ENCODE measurements at regions of chr19 and their contacts with region 1.

Region 1: GRCh38 chr19:9658769-9659168 is 16.1 kb downstream of the ZNF562 start:
- DNase-seq: no peak
- H3K27ac ChIP-seq: no peak overlapping the region
- CTCF ChIP-seq: no peak

Region 2: DNA sequence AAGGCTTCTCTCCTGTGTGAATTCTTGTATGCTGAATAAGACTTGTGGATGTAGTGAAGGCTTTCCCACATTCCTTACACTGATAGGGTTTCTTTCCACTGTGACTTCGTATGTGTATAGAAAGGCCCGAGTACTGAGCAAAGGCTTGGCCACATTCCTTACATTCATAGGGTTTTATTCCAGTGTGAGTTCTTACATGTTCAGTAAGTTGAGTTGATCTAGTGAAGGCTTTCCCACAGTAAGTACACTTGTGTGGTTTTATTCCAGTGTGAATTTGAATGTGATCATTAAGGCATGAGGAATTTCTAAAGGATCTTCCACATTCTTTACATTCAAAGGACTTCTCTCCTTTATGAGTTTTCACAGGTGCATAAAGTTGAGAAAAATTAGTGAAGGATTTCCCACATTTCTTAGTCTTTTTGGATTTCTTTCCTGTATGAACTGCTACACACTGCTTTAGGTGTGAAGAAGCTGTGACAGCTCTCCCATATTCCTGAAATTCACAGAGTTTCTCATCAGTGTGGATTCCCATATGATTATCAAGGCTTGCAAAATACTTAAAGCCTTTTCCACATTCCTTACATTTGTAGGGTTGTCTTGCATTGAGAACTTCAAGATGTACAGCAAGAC is 48.2 kb before region 1 on chr19:
- CTCF ChIA-PET with region 1: no interaction called
- POLR2A ChIA-PET with region 1: no interaction called
- DNase-seq: no peak
- H3K27ac ChIP-seq: no peak overlapping the region
- CTCF ChIP-seq: no peak

Region 3: GRCh38 chr19:9645472-9645871 is 13.3 kb before region 1 on chr19:
- CTCF ChIA-PET with region 1: interaction called, 11 read pairs
- POLR2A ChIA-PET with region 1: interaction called, 3 read pairs
- DNase-seq: no peak
- H3K27ac ChIP-seq: no peak overlapping the region
- CTCF ChIP-seq: no peak